ENCODE measurements at regions of chr12 and their contacts with region 1.

Region 1: DNA sequence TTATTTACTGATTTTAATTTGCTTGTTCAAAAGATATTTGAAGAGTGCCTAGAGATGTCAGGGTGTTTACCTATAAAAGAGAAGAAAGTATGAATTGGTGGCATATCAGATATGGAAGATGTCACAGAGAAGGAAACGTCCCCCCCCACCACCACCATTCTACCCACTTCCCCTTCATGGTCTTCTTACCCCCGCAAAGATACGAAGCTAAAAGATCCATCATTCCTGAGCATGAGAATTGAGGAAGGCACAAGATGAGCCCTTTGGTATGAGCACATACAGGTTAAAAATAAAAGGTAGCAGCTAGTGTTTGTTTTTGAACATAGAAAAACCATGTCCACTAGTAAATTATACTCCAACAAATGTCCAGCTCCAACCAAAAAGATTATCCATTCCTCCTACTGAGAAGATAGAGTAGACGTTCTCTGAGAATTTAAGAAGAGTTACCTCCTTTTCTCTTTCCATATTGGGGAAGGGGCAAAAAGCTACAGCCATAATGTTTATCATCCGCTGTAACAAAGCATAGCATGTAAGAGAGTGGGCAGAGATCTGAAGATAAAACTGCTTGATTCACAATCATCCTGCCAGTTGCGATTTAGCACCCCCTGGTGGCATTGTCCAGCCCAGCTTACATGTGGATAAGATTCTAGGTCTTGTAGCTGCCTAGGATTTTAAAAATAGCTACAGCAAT is 29.1 kb downstream of the NFYB start:
- DNase-seq: peak; percentile 91
- H3K4me3 Mint-ChIP-seq: no peak overlapping the region
- H3K27ac Mint-ChIP-seq: no peak overlapping the region
- H3K4me1 Mint-ChIP-seq: no peaks in the 10 kb centered on the region
- H3K27me3 Mint-ChIP-seq: no peaks in the 10 kb centered on the region
- CTCF ChIP-seq: peak; percentile 69

Region 2: DNA sequence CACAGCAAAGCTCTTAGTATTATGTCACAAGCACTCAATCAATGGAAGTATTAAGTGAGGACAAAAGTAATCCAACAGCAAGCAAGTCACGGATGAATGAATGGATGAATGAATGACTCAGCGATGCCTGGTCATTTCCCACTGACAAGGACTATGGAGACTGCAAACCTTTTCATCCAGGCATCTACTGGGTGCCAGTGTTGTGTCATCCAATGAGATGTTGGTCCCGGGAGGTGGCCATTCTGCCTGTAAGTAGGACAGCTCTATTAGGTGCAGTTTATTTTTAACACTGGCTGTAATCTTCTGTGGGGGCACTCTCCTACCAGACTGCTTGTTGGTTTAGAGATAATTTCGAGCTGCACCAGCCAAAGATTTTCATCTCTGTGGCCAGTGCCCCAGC is 482.4 kb before region 1 on chr12:
- CTCF ChIA-PET with region 1: no interaction called
- intact Hi-C with region 1: loop called (anchors 1 kb)
- DNase-seq: peak; percentile 59
- H3K4me3 Mint-ChIP-seq: no peak overlapping the region
- H3K27ac Mint-ChIP-seq: no peak overlapping the region
- H3K4me1 Mint-ChIP-seq: no peaks in the 10 kb centered on the region
- H3K27me3 Mint-ChIP-seq: no peaks in the 10 kb centered on the region
- CTCF ChIP-seq: no peak

Region 3: DNA sequence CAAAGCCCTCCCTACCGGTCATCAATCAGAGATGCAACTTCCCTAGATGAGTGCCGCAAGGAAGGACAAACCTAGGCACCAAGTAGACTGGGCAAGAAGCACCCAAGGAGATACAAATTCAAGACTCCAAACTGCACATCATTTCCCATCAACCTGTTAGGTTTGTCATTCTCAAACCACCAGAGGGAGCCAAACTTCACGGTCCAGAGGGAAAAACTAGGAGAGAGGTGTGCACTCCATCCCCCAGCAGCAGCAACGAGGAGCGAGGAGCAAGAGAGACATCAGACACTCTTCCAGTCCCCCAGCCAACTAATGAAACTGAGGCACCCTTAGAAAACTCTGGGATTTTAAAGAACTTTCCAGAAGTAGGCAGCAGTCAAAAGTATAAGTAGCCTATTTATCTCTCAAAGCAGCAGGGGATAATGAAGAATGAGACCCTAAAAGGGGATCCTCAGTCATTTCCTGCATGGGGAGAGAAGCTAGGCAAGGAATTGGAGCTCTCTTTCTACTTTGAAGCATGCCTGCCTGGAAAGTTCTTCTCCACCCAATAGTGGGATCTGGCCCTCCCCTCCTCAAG is 230.9 kb before region 1 on chr12:
- CTCF ChIA-PET with region 1: interaction called, 4 read pairs
- intact Hi-C with region 1: loop called (anchors 2 kb)
- DNase-seq: peak; percentile 77
- H3K4me3 Mint-ChIP-seq: no peak overlapping the region
- H3K27ac Mint-ChIP-seq: no peak overlapping the region
- H3K4me1 Mint-ChIP-seq: peaks cover 27% of the 10 kb centered on the region
- H3K27me3 Mint-ChIP-seq: no peaks in the 10 kb centered on the region
- CTCF ChIP-seq: peak; percentile 74

Region 4: GRCh38 chr12:103965590-103966504 is 143.1 kb before region 1 on chr12 and contains the start of gene TDG:
- CTCF ChIA-PET with region 1: interaction called, 10 read pairs
- intact Hi-C with region 1: loop called (anchors 5 kb)
- DNase-seq: peak; percentile 98
- H3K4me3 Mint-ChIP-seq: peak within 1 kb of the TSS; percentile 98
- H3K27ac Mint-ChIP-seq: peak within 1 kb of the TSS; percentile 95
- H3K4me1 Mint-ChIP-seq: peaks cover 29% of the 10 kb centered on the region
- H3K27me3 Mint-ChIP-seq: no peaks in the 10 kb centered on the region
- CTCF ChIP-seq: no peak
- total RNA-seq, gene TDG: 33.5 and 35.3 TPM in 2 replicates

Region 5: GRCh38 chr12:104137913-104138796 is 29.3 kb after region 1 on chr12 and contains the start of gene NFYB:
- CTCF ChIA-PET with region 1: no interaction called
- intact Hi-C with region 1: no loop called
- DNase-seq: peak; percentile 94
- H3K4me3 Mint-ChIP-seq: peak within 1 kb of the TSS; percentile 62
- H3K27ac Mint-ChIP-seq: no peak within 1 kb of the TSS
- H3K4me1 Mint-ChIP-seq: no peaks in the 10 kb centered on the region
- H3K27me3 Mint-ChIP-seq: peaks cover 20% of the 10 kb centered on the region
- CTCF ChIP-seq: no peak
- total RNA-seq, gene NFYB: 28.3 and 36.0 TPM in 2 replicates